ENCODE measurements at regions of chr2 and their contacts with region 1.

Region 1: GRCh38 chr2:20135631-20136050 is 84.2 kb upstream of the LAPTM4A start:
- DNase-seq: peak; percentile 24
- H3K4me3 Mint-ChIP-seq: no peak overlapping the region
- H3K27ac Mint-ChIP-seq: no peak overlapping the region
- H3K4me1 Mint-ChIP-seq: no peaks in the 10 kb centered on the region
- H3K27me3 Mint-ChIP-seq: peaks cover 7% of the 10 kb centered on the region

Region 2: GRCh38 chr2:20212459-20212870 is 76.8 kb after region 1 on chr2:
- intact Hi-C with region 1: no loop called
- DNase-seq: no peak
- H3K4me3 Mint-ChIP-seq: no peak overlapping the region
- H3K27ac Mint-ChIP-seq: no peak overlapping the region
- H3K4me1 Mint-ChIP-seq: no peaks in the 10 kb centered on the region
- H3K27me3 Mint-ChIP-seq: no peaks in the 10 kb centered on the region

Region 3: DNA sequence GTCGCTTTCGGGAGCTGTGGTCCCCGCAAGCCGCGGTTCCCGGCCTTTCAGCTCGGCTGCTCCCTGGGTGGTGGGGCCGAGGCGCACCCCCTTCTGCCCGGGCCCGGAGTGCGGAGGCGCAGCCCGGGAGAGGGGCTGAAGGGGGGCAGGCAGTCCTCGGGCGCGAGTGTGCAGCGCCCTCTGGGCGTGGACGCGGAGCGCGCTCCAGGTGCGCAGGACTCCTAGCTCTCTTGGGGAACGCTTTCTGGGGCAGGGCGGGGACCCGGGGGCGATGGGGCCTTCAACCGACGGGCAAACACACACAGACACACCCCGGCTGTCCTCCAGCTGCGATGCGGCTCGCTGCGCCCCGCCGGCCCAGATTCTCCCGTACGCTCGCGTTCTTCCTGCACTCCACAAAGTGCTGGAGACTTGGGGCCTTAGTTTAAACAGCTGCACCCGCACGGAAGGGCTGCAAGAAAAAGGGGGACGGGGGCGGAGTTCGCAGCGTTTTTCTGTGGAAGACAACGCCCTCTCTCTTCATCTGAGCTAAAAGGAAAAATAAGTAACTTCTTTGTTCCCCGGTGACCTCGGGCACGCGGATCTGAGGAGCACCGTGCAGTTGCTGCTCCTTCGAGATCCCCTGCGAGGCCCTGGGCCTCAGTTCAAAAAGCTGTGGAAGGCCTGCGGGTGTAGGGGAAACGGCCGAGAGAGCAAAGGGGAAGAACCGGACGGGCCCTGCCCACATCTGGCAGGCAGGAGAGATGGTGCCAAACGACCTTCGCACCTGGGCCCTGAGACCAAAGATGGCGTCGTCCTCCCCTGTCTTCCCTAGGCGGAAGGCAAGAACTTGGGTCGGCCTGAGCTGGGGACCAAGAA is 89.9 kb after region 1 on chr2:
- intact Hi-C with region 1: loop called (anchors 10 kb)
- DNase-seq: peak; percentile 28
- H3K4me3 Mint-ChIP-seq: peak overlapping the region; percentile 64
- H3K27ac Mint-ChIP-seq: no peak overlapping the region
- H3K4me1 Mint-ChIP-seq: peaks cover 4% of the 10 kb centered on the region
- H3K27me3 Mint-ChIP-seq: peaks cover 57% of the 10 kb centered on the region

Region 4: DNA sequence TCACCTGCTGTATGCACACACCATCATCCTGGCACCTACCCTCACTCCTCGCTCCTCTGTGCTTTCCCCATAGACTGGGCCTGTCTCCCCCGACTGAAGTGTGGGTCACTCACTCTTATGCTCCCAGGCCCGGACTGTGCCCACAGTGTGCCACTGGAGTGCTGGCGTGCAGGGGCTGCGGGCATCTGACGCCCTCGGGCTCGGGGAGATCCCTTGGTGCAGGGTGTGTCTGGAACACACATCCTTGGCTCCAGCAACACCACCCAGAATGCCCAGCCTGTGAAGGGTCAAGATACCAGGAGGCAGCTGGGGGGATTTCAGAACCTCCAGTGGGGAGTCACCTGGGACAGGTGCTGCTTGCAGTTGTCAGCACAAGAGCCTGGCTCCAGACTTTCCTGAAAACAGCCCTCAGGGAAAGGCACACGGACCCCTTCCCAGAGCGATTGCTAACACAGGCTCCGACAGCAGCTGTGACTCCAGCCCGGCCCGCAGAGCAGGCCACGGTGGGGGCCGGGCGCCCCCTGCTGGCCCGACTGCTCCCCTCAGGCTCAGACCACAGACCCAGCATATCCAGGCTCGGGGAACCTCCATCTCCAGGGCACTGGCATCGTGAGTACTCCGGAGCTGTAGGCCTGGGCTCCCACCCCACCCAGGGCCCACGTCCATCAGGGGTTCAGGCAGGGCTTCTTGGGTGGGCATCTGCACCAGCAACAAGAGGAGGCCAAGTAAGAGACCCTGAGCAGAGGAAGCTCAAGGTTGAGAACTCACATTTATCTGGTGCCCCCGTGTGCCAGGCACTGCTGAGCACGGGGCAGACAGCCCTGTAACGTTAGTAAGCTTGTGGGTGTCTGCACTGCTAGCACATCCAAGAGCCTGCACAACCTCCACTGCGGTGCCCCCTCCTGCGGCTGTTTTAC is 506.7 kb after region 1 on chr2:
- intact Hi-C with region 1: loop called (anchors 5 kb)
- DNase-seq: peak; percentile 52
- H3K4me3 Mint-ChIP-seq: no peak overlapping the region
- H3K27ac Mint-ChIP-seq: peak overlapping the region; percentile 5
- H3K4me1 Mint-ChIP-seq: no peaks in the 10 kb centered on the region
- H3K27me3 Mint-ChIP-seq: no peaks in the 10 kb centered on the region